CD8-positive, alpha-beta T cell (primary cell): ENCODE measurements at regions of chr17 and their contacts with region 1.

Region 1: DNA sequence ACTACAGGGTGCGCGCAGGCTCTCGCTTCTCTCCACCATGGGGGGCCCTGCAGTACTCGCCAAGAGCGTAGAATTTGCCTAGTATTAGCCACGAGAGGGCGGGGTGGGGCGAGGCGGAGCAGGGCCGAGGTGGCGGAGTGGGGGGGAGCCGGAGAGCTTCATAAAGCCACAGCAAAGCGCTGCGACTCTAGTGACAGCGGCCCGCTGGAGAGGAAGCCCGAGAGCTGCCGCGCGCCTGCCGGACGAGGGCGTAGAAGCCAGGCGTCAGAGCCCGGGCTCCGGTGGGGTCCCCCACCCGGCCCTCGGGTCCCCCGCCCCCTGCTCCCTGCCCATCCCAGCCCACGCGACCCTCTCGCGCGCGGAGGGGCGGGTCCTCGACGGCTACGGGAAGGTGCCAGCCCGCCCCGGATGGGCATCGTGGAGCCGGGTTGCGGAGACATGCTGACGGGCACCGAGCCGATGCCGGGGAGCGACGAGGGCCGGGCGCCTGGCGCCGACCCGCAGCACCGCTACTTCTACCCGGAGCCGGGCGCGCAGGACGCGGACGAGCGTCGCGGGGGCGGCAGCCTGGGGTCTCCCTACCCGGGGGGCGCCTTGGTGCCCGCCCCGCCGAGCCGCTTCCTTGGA is at the start of gene TBX21:
- DNase-seq: peak; percentile 81 to 96 (median 91)
- ATAC-seq: peak; percentile 85
- H3K4me3 ChIP-seq: peak within 1 kb of the TSS; percentile 70 to 99
- H3K4me3 Mint-ChIP-seq: peak within 1 kb of the TSS; percentile 97
- H3K27ac ChIP-seq: peak within 1 kb of the TSS; percentile 58 to 88
- H3K27ac Mint-ChIP-seq: peak within 1 kb of the TSS; percentile 96
- H3K4me1 ChIP-seq: peaks cover 19% of the 10 kb centered on the region
- H3K4me1 Mint-ChIP-seq: peaks cover 47% of the 10 kb centered on the region
- H3K27me3 ChIP-seq: no peaks in the 10 kb centered on the region
- H3K27me3 Mint-ChIP-seq: peaks cover 3% of the 10 kb centered on the region
- CTCF ChIP-seq: peak; percentile 43
- total RNA-seq, gene TBX21: 37.0 to 39.1 TPM

Region 2: DNA sequence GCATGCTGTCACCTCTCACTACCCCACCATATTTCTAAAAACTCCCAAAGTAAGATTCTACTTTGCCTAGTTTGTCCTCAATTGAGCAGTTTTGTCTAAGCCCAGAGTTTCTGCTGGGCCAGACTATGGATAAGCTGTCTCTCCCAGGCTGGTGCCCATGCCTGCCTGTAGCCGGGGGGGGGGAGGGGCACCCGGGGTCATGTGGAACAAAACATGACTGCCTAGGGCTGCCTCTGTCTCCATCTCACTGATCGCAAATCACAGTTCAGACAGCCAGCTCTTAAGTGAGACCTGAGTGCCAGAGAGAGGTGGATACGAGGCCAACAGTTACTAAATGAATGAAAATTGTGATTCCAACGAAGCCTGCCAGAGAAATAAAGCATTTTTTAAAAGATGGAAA is 675.3 kb before region 1 on chr17:
- CTCF ChIA-PET with region 1: no interaction called
- POLR2A ChIA-PET with region 1: no interaction called
- intact Hi-C with region 1: no loop called
- DNase-seq: no peak
- ATAC-seq: no peak
- H3K4me3 ChIP-seq: no peak overlapping the region
- H3K4me3 Mint-ChIP-seq: no peak overlapping the region
- H3K27ac ChIP-seq: no peak overlapping the region
- H3K27ac Mint-ChIP-seq: no peak overlapping the region
- H3K4me1 ChIP-seq: no peaks in the 10 kb centered on the region
- H3K4me1 Mint-ChIP-seq: no peaks in the 10 kb centered on the region
- H3K27me3 ChIP-seq: no peaks in the 10 kb centered on the region
- H3K27me3 Mint-ChIP-seq: no peaks in the 10 kb centered on the region
- CTCF ChIP-seq: no peak

Region 3: DNA sequence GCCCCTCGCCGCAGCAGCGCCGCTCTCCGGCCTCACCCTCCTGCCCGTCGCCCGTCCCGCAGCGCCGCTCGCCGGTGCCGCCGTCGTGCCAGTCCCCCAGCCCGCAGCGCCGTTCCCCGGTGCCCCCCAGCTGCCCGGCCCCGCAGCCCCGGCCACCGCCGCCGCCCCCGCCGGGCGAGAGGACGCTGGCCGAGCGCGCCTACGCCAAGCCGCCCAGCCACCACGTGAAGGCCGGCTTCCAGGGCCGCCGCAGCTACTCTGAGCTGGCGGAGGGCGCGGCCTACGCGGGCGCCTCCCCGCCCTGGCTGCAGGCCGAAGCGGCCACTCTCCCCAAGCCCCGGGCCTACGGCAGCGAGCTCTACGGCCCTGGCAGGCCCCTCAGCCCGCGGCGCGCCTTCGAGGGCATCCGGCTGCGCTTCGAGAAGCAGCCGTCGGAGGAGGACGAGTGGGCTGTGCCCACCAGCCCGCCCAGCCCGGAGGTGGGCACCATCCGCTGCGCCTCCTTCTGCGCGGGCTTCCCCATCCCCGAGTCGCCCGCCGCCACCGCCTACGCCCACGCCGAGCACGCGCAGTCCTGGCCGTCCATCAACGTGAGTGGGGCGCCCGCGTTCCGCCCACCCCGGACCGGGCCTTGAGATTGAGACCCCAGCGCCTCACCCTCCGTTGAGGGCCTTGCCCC is 24.2 kb before region 1 on chr17:
- CTCF ChIA-PET with region 1: interaction called, 8 read pairs
- POLR2A ChIA-PET with region 1: interaction called, 5 read pairs
- intact Hi-C with region 1: loop called in 1 of 2 experiments (anchors 2 kb)
- DNase-seq: no peak
- ATAC-seq: no peak
- H3K4me3 ChIP-seq: no peak overlapping the region
- H3K4me3 Mint-ChIP-seq: no peak overlapping the region
- H3K27ac ChIP-seq: no peak overlapping the region
- H3K27ac Mint-ChIP-seq: no peak overlapping the region
- H3K4me1 ChIP-seq: peaks cover 67% of the 10 kb centered on the region
- H3K4me1 Mint-ChIP-seq: peaks cover 56% of the 10 kb centered on the region
- H3K27me3 ChIP-seq: no peaks in the 10 kb centered on the region
- H3K27me3 Mint-ChIP-seq: no peaks in the 10 kb centered on the region
- CTCF ChIP-seq: no peak

Region 4: GRCh38 chr17:47720754-47721533 is 12.2 kb before region 1 on chr17:
- CTCF ChIA-PET with region 1: interaction called, 16 read pairs
- POLR2A ChIA-PET with region 1: interaction called, 9 read pairs
- intact Hi-C with region 1: loop called in 1 of 2 experiments (anchors 1 kb)
- DNase-seq: peak in 8 of 9 experiments; percentile 62 to 84 (median 75)
- ATAC-seq: peak; percentile 70
- H3K4me3 ChIP-seq: peak overlapping the region in 1 of 2 experiments; percentile 33
- H3K4me3 Mint-ChIP-seq: peak overlapping the region; percentile 53
- H3K27ac ChIP-seq: peak overlapping the region in 1 of 2 experiments; percentile 76
- H3K27ac Mint-ChIP-seq: peak overlapping the region; percentile 70
- H3K4me1 ChIP-seq: peaks cover 62% of the 10 kb centered on the region
- H3K4me1 Mint-ChIP-seq: peaks cover 58% of the 10 kb centered on the region
- H3K27me3 ChIP-seq: no peaks in the 10 kb centered on the region
- H3K27me3 Mint-ChIP-seq: no peaks in the 10 kb centered on the region
- CTCF ChIP-seq: no peak

Region 5: DNA sequence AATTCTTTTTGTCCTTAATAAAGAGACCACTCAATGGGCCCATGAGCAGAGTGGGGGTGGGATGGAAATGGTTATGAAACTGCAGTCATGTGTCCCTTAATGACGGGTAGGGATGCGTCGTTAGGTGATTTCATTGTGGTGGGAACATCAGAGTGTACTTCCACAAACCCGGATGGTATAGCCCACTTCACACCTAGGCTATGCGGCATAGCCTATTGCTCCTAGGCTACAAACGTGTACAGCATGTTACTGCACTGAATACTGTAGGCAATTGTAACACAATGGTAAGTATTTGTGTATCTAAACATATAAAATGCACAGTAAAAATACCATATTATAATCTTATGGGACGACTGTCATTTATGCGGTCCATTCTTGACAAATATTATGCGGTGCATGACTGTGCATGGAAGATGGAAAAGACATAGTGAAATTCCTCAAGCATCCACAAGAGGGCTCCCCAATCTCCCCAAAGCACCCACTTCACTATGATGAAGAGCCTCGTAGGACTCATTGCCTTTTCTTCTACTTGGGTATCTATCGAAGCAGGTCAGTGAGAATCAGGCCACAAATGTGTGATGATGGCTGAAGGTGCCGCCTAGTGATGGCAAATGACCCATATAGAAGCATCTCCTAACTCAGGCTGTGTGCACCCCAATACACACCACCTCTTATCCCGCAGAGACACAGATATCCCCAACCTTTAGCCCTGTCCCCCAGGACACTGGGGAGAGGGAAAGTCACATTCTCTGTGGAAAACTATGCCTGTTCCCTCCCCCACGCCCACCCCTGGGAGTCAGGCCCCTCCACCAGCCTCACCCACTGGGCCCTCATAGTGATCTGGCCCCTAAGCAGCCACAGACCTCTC is 43.4 kb after region 1 on chr17:
- CTCF ChIA-PET with region 1: interaction called, 3 read pairs
- POLR2A ChIA-PET with region 1: interaction called, 4 read pairs
- intact Hi-C with region 1: loop called in 1 of 2 experiments (anchors 2 kb)
- DNase-seq: peak in 6 of 9 experiments; percentile 24 to 73 (median 32)
- ATAC-seq: peak; percentile 96
- H3K4me3 ChIP-seq: no peak overlapping the region
- H3K4me3 Mint-ChIP-seq: no peak overlapping the region
- H3K27ac ChIP-seq: no peak overlapping the region
- H3K27ac Mint-ChIP-seq: no peak overlapping the region
- H3K4me1 ChIP-seq: no peaks in the 10 kb centered on the region
- H3K4me1 Mint-ChIP-seq: peaks cover 3% of the 10 kb centered on the region
- H3K27me3 ChIP-seq: peaks cover 8 to 11% of the 10 kb centered on the region in 2 experiments
- H3K27me3 Mint-ChIP-seq: peaks cover 41% of the 10 kb centered on the region
- CTCF ChIP-seq: peak; percentile 88